ENCODE measurements at regions of chr7 and their contacts with region 1.

Region 1: DNA sequence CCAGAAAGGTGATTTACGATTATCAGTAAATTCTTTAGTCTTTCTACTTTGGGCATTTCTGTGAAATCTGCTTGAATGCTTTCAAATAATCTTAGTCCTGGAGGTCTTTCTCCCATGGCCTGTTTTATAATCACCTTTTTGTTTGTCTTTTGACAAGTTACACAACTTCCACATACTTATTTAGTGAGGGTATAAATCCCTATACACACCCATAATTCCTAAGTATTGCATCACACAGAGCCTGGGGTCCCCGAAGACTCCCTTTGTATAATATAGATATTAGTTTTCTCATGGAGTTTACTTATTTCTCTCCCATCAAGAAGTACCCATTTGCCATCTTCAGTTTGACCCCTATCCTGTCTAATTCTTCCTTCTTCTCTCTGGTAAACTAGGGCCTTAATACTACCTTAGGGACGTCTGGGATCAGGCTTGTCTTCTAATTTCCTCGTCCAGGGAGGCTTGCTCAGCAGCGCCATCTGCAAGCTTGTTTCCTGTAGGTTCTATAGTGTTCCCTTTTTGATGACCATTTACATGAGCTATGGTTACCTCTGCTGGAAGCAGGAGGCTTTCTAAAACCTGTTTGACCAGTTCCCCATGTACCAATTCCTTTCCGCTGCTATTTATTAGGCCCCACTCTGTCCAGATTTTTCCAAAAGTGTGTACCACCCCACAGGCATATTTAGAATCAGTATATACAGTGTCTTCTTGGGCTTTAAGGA is 8.1 kb downstream of the DNAH11 start:
- DNase-seq: no peak
- ATAC-seq: no peak
- H3K4me3 ChIP-seq: no peak overlapping the region
- H3K27ac ChIP-seq: no peak overlapping the region
- H3K4me1 ChIP-seq: peaks cover 0 to 10% (median 0%) of the 10 kb centered on the region in 9 donors
- H3K27me3 ChIP-seq: peaks cover 0 to 21% (median 4%) of the 10 kb centered on the region in 7 donors
- CTCF ChIP-seq: no peak

Region 2: DNA sequence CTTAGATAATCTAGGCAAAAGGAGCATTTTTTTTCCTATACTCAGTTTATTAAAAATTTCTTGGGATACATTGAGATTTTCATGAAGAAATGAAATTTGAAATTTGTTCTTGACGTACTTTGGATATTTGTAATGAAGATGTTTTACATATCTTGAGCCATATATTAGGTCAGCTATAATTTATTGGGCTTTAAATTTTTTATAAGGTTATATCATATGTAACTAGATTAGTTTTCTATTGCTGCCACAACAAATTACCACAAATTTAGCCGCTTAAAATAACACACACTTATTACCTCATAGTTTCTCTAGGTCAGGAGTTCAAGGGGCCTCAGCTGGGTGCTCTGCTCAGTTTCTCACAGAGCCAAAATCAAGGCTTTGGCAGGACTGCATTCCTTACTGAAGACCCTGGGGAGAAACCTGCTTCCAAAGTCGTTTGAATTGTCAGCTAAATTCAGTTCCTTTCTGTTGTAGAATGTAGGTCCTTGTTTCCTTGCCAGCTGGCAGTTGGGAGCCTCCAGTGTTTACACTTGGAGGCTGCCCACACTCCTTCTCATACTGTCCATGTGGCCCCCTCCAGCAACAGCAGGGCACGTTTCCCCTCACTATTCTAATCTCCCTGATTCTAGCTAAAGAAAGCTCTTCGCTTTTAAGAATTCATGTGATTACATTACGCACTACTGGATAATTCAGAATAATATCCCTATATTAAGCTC is 50.7 kb before region 1 on chr7:
- intact Hi-C with region 1: loop called in 1 of 10 experiments (anchors 1 kb)
- DNase-seq: no peak
- ATAC-seq: no peak
- H3K4me3 ChIP-seq: no peak overlapping the region
- H3K27ac ChIP-seq: no peak overlapping the region
- H3K4me1 ChIP-seq: no peaks in the 10 kb centered on the region
- H3K27me3 ChIP-seq: no peaks in the 10 kb centered on the region
- CTCF ChIP-seq: no peak

Region 3: GRCh38 chr7:21603972-21604749 is 53.2 kb after region 1 on chr7:
- intact Hi-C with region 1: no loop called
- DNase-seq: no peak
- ATAC-seq: no peak
- H3K4me3 ChIP-seq: no peak overlapping the region
- H3K27ac ChIP-seq: no peak overlapping the region
- H3K4me1 ChIP-seq: no peaks in the 10 kb centered on the region
- H3K27me3 ChIP-seq: peaks cover 0 to 2% (median 0%) of the 10 kb centered on the region in 7 donors
- CTCF ChIP-seq: no peak

Region 4: DNA sequence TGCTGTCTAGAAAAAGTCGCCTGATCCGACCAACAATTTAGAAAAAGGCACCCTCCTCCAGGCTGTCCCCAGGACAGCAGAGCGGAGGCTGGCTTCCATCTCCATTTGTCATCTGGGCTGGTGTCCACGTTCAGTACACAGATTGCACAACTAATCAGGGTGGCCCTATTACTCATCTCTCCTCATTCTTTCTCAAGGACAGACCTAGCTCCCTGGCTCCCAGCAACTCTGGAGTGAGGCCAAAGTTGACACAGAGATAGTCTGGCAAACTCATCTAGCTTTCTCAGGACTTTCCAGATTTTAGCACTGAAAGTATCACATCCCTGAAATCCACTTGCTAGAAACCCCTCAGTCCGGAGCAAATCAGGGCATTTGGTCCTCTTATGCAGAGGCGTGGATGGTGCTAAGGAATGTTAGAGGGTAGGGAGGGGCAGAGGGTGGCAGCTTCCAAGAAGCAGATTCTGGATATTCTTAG is 67.0 kb after region 1 on chr7:
- intact Hi-C with region 1: no loop called
- DNase-seq: peak; percentile 47 to 51
- ATAC-seq: peak; percentile 38 to 100 (median 88)
- H3K4me3 ChIP-seq: no peak overlapping the region
- H3K27ac ChIP-seq: no peak overlapping the region
- H3K4me1 ChIP-seq: peaks cover 0 to 15% (median 0%) of the 10 kb centered on the region in 9 donors
- H3K27me3 ChIP-seq: no peaks in the 10 kb centered on the region
- CTCF ChIP-seq: no peak

Region 5: GRCh38 chr7:21966271-21966670 is 415.3 kb after region 1 on chr7:
- intact Hi-C with region 1: no loop called
- DNase-seq: no peak
- ATAC-seq: no peak
- H3K4me3 ChIP-seq: no peak overlapping the region
- H3K27ac ChIP-seq: no peak overlapping the region
- H3K4me1 ChIP-seq: peaks cover 0 to 4% (median 0%) of the 10 kb centered on the region in 9 donors
- H3K27me3 ChIP-seq: no peaks in the 10 kb centered on the region
- CTCF ChIP-seq: no peak